H1 (cell line): ENCODE measurements at regions of chr10 and their contacts with region 1.

Region 1: DNA sequence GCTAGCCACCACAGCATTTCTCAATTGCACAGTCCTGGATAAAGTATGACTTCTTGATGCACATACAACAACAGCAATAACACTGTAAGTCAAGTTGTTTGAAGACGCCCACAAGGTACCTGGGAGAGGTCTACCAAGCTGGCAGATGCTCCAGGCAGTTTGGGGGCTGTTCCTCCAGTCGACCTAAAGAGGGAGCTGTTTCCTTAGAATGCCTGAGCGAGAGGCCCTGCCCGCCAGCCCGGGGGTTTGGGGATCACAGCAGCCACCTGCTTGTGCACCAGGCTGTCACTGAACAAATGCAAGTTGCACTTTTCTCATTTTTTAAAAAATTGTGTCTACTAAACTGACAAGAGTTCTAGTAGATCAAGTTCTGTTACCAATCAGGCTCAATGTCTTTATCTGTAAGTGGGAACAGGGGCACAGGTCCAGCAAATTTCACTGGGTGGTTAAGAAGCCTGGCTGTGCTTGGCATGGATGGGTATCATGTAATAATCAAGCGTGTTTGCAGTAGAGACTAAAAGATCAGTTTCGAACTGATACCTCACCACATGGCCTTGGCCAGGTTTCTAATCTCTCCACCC is 193.8 kb upstream of the ADO start:
- DNase-seq: peak; percentile 47 to 83
- H3K4me3 ChIP-seq: no peak overlapping the region
- H3K27ac ChIP-seq: no peak overlapping the region
- H3K4me1 ChIP-seq: no peaks in the 10 kb centered on the region
- H3K27me3 ChIP-seq: no peaks in the 10 kb centered on the region; a peak in 1 of 7 replicates
- CTCF ChIP-seq: peak; percentile 88 to 97 (median 94)
- EP300 ChIP-seq: no peak
- POLR2A ChIP-seq: no peak
- RAD21 ChIP-seq: peak; percentile 98 to 99

Region 2: GRCh38 chr10:62492012-62492869 is 118.5 kb before region 1 on chr10:
- CTCF ChIA-PET with region 1: no interaction called
- POLR2A ChIA-PET with region 1: no interaction called
- DNase-seq: no peak
- H3K4me3 ChIP-seq: no peak overlapping the region
- H3K27ac ChIP-seq: no peak overlapping the region
- H3K4me1 ChIP-seq: no peaks in the 10 kb centered on the region
- H3K27me3 ChIP-seq: no peaks in the 10 kb centered on the region
- CTCF ChIP-seq: peak in 2 of 3 experiments; percentile 56 to 66; a peak in 3 of 4 replicates
- EP300 ChIP-seq: no peak
- POLR2A ChIP-seq: no peak
- RAD21 ChIP-seq: peak; percentile 65 to 78

Region 3: GRCh38 chr10:62582804-62583208 is 27.9 kb before region 1 on chr10:
- CTCF ChIA-PET with region 1: no interaction called
- POLR2A ChIA-PET with region 1: no interaction called
- DNase-seq: no peak
- H3K4me3 ChIP-seq: no peak overlapping the region
- H3K27ac ChIP-seq: no peak overlapping the region
- H3K4me1 ChIP-seq: no peaks in the 10 kb centered on the region
- H3K27me3 ChIP-seq: peaks cover 0 to 1% (median 0%) of the 10 kb centered on the region in 4 experiments; a peak in 2 of 7 replicates
- CTCF ChIP-seq: no peak
- EP300 ChIP-seq: no peak
- POLR2A ChIP-seq: no peak
- RAD21 ChIP-seq: no peak

Region 4: GRCh38 chr10:62684911-62685310 is 74.2 kb after region 1 on chr10:
- CTCF ChIA-PET with region 1: interaction called, 12 read pairs
- POLR2A ChIA-PET with region 1: no interaction called
- DNase-seq: no peak
- H3K4me3 ChIP-seq: no peak overlapping the region
- H3K27ac ChIP-seq: no peak overlapping the region
- H3K4me1 ChIP-seq: no peaks in the 10 kb centered on the region; a peak in 1 of 7 replicates
- H3K27me3 ChIP-seq: no peaks in the 10 kb centered on the region
- CTCF ChIP-seq: no peak
- EP300 ChIP-seq: no peak
- POLR2A ChIP-seq: no peak
- RAD21 ChIP-seq: no peak

Region 5: GRCh38 chr10:62816331-62817120 is 205.8 kb after region 1 on chr10 and contains the start of gene EGR2:
- CTCF ChIA-PET with region 1: interaction called, 94 read pairs
- POLR2A ChIA-PET with region 1: interaction called, 29 read pairs
- DNase-seq: peak; percentile 66 to 89
- H3K4me3 ChIP-seq: peak within 1 kb of the TSS; percentile 56 to 81 (median 70)
- H3K27ac ChIP-seq: peak within 1 kb of the TSS; percentile 79; the same call in 1 of the 2 replicates
- H3K4me1 ChIP-seq: peaks cover 0 to 11% (median 4%) of the 10 kb centered on the region in 4 experiments; a peak in 4 of 7 replicates
- H3K27me3 ChIP-seq: peaks cover 20 to 64% (median 58%) of the 10 kb centered on the region in 4 experiments
- CTCF ChIP-seq: no peak
- EP300 ChIP-seq: no peak
- POLR2A ChIP-seq: peak; percentile 53 to 72
- RAD21 ChIP-seq: peak in 1 of 2 experiments; percentile 1; a peak in 1 of 4 replicates
- total RNA-seq, gene EGR2: 2.1 and 3.0 TPM in 2 replicates